ENCODE measurements at regions of chr3 and their contacts with region 1.

Region 1: DNA sequence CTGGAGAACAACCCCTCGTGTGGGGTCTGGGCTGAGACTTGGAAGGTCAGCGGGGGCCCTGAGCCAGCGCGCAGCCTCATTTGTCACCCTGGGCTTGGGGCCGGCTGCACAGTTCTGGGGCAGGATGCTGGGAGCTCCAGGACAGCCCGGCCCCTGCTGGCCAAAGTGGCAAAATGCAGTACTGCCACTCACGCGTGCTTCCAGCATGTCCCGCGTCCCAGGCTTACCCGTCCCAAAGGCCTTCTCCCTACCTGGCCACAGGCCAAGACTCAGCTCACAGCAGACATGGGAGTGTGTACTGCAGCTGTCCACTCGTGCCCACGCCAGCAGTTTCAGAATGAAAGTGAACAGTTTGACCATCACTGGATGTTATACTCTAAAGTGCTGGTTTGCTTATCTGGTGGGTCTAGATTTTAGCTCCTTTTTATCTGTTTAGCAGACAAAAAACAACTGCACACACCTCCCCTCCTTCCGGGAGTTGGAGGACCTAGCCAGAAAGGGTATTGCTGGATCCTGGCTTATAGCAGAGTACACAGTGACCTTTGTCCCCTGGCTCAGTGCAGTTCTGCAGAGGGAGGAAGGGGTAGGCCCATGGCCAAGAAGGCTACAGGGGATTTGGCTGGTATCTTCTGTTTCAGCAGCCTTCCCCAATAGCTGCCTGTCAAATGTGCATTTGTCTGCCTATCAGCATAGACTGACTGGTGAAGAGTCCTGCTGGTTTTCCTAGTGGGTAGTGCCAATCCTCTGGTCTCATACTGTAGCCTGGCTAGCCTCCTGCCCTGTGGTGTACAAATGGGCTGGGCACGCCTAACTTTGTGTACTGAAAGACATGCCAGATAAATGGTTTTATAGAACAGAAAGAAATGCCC is 23.2 kb upstream of the IP6K2 start:
- DNase-seq: no peak
- H3K4me3 ChIP-seq: no peak overlapping the region
- CTCF ChIP-seq: peak; percentile 92

Region 2: GRCh38 chr3:48685602-48686511 is 54.3 kb before region 1 on chr3 and contains the start of gene NCKIPSD:
- CTCF ChIA-PET with region 1: interaction called, 11 read pairs
- POLR2A ChIA-PET with region 1: no interaction called
- DNase-seq: no peak
- H3K4me3 ChIP-seq: peak within 1 kb of the TSS; percentile 95
- CTCF ChIP-seq: peak; percentile 84

Region 3: GRCh38 chr3:48716982-48717746 is 23.0 kb before region 1 on chr3 and contains the start of gene IP6K2:
- CTCF ChIA-PET with region 1: interaction called, 65 read pairs
- POLR2A ChIA-PET with region 1: interaction called, 4 read pairs
- DNase-seq: peak; percentile 76
- H3K4me3 ChIP-seq: peak within 1 kb of the TSS; percentile 94
- CTCF ChIP-seq: no peak

Region 4: GRCh38 chr3:48727511-48727910 is 12.7 kb before region 1 on chr3:
- CTCF ChIA-PET with region 1: interaction called, 24 read pairs
- POLR2A ChIA-PET with region 1: no interaction called
- DNase-seq: no peak
- H3K4me3 ChIP-seq: no peak overlapping the region
- CTCF ChIP-seq: no peak

Region 5: GRCh38 chr3:48770187-48770502 is 30.0 kb after region 1 on chr3:
- CTCF ChIA-PET with region 1: interaction called, 13 read pairs
- POLR2A ChIA-PET with region 1: no interaction called
- DNase-seq: no peak
- H3K4me3 ChIP-seq: no peak overlapping the region
- CTCF ChIP-seq: no peak

Region 6: GRCh38 chr3:48788544-48789162 is 48.5 kb after region 1 on chr3:
- CTCF ChIA-PET with region 1: interaction called, 10 read pairs
- POLR2A ChIA-PET with region 1: interaction called, 3 read pairs
- DNase-seq: no peak
- H3K4me3 ChIP-seq: no peak overlapping the region
- CTCF ChIP-seq: no peak

Region 7: DNA sequence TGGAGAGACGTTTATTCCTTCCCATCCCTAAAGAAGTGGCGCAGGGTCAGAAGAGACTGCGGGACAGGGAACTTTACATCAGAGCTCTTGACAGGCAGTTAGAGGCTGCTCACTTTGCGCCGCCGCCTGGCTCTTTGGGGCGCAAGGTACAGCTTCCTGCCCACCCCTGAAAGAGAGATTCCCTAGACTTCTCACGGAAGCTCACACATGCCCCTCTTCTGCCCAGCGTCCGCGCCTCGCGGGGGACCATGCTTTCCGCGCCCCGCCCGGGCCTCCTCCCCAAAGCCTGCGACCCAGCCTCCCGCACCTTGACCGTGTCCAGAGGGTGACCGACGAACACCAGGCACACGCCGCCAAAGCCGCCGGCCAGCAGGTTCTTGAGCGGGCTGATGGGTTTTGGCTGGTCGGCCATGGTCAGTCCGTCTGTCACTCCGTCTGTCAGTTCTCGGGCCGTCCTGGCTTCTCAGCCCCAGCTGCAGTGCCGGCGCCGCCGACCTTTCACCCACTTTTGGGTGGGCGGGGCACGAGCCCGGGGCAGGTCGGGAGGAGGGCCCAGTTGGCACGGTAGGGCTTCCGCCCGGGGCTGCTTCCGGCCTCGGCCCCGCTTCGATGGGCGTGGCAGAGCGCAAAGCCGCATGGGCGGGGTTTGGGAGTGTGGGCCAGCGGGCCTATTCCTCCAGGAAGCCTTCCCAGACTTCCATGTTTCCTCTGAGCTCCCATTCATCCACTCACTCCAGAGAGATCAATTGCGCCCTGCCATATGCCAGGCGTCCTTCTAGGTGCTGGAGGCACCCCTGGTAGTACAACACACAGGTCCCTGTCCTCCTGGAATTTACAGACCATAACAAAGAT is 158.4 kb after region 1 on chr3 and contains the start of gene SLC25A20:
- CTCF ChIA-PET with region 1: interaction called, 10 read pairs
- POLR2A ChIA-PET with region 1: no interaction called
- DNase-seq: no peak
- H3K4me3 ChIP-seq: peak within 1 kb of the TSS; percentile 83
- CTCF ChIP-seq: peak; percentile 10

Measured in AG04449 (cell line).